ENCODE measurements at regions of chr18 and their contacts with region 1.

Region 1: DNA sequence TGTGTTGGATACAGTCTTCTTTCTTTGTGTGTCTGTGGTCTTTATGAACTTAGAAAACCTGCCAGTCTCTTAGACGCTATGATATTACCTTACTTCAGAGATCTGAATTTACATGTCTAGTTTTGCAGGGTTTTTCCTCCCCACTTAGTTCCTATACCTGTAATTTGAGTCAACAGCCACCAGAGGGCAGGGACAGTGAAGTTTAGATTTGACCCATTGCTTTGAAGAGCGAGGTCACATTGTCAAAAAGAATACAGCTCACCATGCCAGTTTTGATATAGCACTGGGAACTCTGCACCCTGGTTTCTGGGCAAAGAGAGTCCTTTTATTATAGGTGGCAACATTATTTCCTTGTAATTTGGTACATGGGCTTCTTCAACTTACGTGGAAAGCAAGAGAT is 102.3 kb downstream of the MAPK4 start:
- DNase-seq: no peak
- ATAC-seq: peak; percentile 50
- H3K4me3 Mint-ChIP-seq: no peak overlapping the region
- H3K27ac Mint-ChIP-seq: no peak overlapping the region
- H3K4me1 Mint-ChIP-seq: peaks cover 37% of the 10 kb centered on the region
- H3K27me3 Mint-ChIP-seq: no peaks in the 10 kb centered on the region
- CTCF ChIP-seq: peak; percentile 70; the same call in 1 of the 2 replicates

Region 2: DNA sequence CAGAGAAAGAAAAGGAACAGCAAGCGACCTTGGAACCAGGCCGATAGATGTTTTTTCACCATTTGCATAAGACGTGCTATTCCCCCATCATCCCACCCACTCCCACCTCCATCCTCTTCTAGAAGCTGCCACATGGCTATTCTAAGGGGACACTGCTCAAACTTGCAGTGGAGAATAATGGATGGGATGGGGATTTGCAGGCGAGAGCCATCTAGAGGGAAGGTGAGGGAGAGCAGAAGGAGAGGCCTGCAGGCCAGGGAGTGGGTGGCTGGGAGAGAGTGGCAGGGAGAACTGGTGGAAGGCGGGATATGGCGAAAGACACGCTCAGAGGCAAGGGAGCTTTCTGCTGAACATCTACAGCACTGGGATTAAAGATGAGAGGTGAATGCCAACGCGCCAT is 17.4 kb before region 1 on chr18:
- CTCF ChIA-PET with region 1: interaction called, 12 read pairs
- POLR2A ChIA-PET with region 1: no interaction called
- DNase-seq: peak; percentile 60
- ATAC-seq: peak; percentile 99
- H3K4me3 Mint-ChIP-seq: no peak overlapping the region
- H3K27ac Mint-ChIP-seq: peak overlapping the region; percentile 4; the same call in 1 of the 2 replicates
- H3K4me1 Mint-ChIP-seq: peaks cover 11% of the 10 kb centered on the region
- H3K27me3 Mint-ChIP-seq: no peaks in the 10 kb centered on the region
- CTCF ChIP-seq: no peak

Region 3: GRCh38 chr18:50674307-50674706 is 12.1 kb after region 1 on chr18:
- CTCF ChIA-PET with region 1: interaction called, 11 read pairs
- POLR2A ChIA-PET with region 1: no interaction called
- DNase-seq: no peak
- ATAC-seq: no peak
- H3K4me3 Mint-ChIP-seq: no peak overlapping the region
- H3K27ac Mint-ChIP-seq: no peak overlapping the region
- H3K4me1 Mint-ChIP-seq: peaks cover 4% of the 10 kb centered on the region; the same call in 1 of the 2 replicates
- H3K27me3 Mint-ChIP-seq: no peaks in the 10 kb centered on the region
- CTCF ChIP-seq: no peak

Region 4: DNA sequence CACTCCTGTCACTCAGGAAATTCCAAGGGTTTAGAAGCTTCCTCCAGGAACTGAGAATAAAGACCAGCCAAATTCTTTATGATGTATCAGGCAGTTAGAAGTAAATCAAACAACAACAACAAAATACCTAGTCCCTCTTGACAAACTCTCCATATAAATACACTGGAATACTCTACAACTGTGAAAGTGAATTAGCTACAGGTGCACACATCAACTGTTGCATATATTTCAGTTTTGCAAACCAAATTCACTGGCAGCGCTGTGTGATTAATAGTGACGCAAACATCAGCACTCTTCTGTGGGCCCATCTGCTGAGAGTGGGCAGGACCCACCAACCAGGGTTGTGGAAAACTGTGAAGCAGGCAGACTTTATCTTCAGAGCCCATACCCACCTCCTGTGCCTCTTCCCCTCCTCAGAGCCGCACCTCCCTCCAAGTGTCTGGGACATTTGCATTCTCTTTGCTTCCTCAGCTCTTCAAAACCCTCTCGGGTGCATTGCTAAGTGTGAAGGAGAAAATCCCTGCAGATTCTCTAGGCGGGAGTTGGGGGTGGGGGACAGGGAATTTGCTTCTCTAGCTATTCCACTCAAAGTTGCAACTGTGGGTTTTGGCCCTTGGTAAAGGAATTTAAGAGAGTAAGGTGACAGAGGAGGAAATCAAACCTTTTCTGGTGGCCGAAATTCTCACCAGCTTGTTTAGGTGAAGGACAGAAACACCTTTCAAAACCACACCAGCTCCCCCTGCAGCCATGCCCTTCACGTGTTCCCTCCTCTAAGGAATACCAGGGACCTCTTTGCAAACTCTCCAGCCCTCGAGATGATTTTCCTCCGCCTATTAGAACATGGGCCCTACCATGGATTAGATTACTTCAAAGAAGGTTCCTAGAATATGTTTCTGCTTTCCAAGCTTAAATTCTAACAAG is 38.3 kb after region 1 on chr18:
- CTCF ChIA-PET with region 1: interaction called, 10 read pairs
- POLR2A ChIA-PET with region 1: no interaction called
- DNase-seq: no peak
- ATAC-seq: peak; percentile 72
- H3K4me3 Mint-ChIP-seq: no peak overlapping the region
- H3K27ac Mint-ChIP-seq: peak overlapping the region; percentile 2
- H3K4me1 Mint-ChIP-seq: peaks cover 44% of the 10 kb centered on the region
- H3K27me3 Mint-ChIP-seq: no peaks in the 10 kb centered on the region
- CTCF ChIP-seq: no peak

Region 5: GRCh38 chr18:50722304-50722703 is 60.1 kb after region 1 on chr18:
- CTCF ChIA-PET with region 1: interaction called, 10 read pairs
- POLR2A ChIA-PET with region 1: no interaction called
- DNase-seq: no peak
- ATAC-seq: peak; percentile 80
- H3K4me3 Mint-ChIP-seq: no peak overlapping the region
- H3K27ac Mint-ChIP-seq: no peak overlapping the region
- H3K4me1 Mint-ChIP-seq: peaks cover 17% of the 10 kb centered on the region
- H3K27me3 Mint-ChIP-seq: no peaks in the 10 kb centered on the region
- CTCF ChIP-seq: no peak

Region 6: GRCh38 chr18:50786864-50787263 is 124.7 kb after region 1 on chr18:
- CTCF ChIA-PET with region 1: interaction called, 23 read pairs
- POLR2A ChIA-PET with region 1: no interaction called
- DNase-seq: no peak
- ATAC-seq: no peak
- H3K4me3 Mint-ChIP-seq: no peak overlapping the region
- H3K27ac Mint-ChIP-seq: no peak overlapping the region
- H3K4me1 Mint-ChIP-seq: peaks cover 18% of the 10 kb centered on the region
- H3K27me3 Mint-ChIP-seq: no peaks in the 10 kb centered on the region
- CTCF ChIP-seq: no peak

Measured in WTC11 (cell line).